CD8-positive, alpha-beta memory T cell (primary cell): ENCODE measurements at regions of chr19 and their contacts with region 1.

Region 1: GRCh38 chr19:12890787-12891552 is at the start of gene GCDH:
- DNase-seq: peak; percentile 92 to 98 (median 97)
- H3K4me3 ChIP-seq: peak within 1 kb of the TSS; percentile 87
- H3K4me3 Mint-ChIP-seq: peak within 1 kb of the TSS; percentile 93 to 100 (median 98)
- H3K27ac ChIP-seq: peak within 1 kb of the TSS; percentile 69
- H3K27ac Mint-ChIP-seq: peak within 1 kb of the TSS; percentile 82 to 99 (median 98)
- H3K4me1 ChIP-seq: peaks cover 12% of the 10 kb centered on the region
- H3K4me1 Mint-ChIP-seq: peaks cover 25 to 45% (median 27%) of the 10 kb centered on the region in 3 donors
- H3K27me3 ChIP-seq: no peaks in the 10 kb centered on the region
- H3K27me3 Mint-ChIP-seq: peaks cover 0 to 4% of the 10 kb centered on the region in 2 donors
- total RNA-seq, gene GCDH: 59.4 to 60.1 TPM

Region 2: GRCh38 chr19:12913011-12913561 is 22.1 kb after region 1 on chr19:
- CTCF ChIA-PET with region 1: interaction called, 10 read pairs
- POLR2A ChIA-PET with region 1: interaction called, 9 read pairs
- DNase-seq: no peak
- H3K4me3 ChIP-seq: no peak overlapping the region
- H3K4me3 Mint-ChIP-seq: no peak overlapping the region
- H3K27ac ChIP-seq: no peak overlapping the region
- H3K27ac Mint-ChIP-seq: peak overlapping the region in 3 of 8 donors; percentile 51 to 93 (median 93)
- H3K4me1 ChIP-seq: peaks cover 22% of the 10 kb centered on the region
- H3K4me1 Mint-ChIP-seq: peaks cover 19 to 29% (median 20%) of the 10 kb centered on the region in 3 donors
- H3K27me3 ChIP-seq: no peaks in the 10 kb centered on the region
- H3K27me3 Mint-ChIP-seq: peaks cover 0 to 2% of the 10 kb centered on the region in 2 donors

Region 3: GRCh38 chr19:12924616-12925276 is 33.8 kb after region 1 on chr19:
- CTCF ChIA-PET with region 1: no interaction called
- POLR2A ChIA-PET with region 1: no interaction called
- DNase-seq: no peak
- H3K4me3 ChIP-seq: no peak overlapping the region
- H3K4me3 Mint-ChIP-seq: no peak overlapping the region
- H3K27ac ChIP-seq: no peak overlapping the region
- H3K27ac Mint-ChIP-seq: peak overlapping the region in 1 of 8 donors; percentile 41
- H3K4me1 ChIP-seq: no peaks in the 10 kb centered on the region
- H3K4me1 Mint-ChIP-seq: peaks cover 3 to 10% (median 4%) of the 10 kb centered on the region in 3 donors
- H3K27me3 ChIP-seq: no peaks in the 10 kb centered on the region
- H3K27me3 Mint-ChIP-seq: no peaks in the 10 kb centered on the region

Region 4: DNA sequence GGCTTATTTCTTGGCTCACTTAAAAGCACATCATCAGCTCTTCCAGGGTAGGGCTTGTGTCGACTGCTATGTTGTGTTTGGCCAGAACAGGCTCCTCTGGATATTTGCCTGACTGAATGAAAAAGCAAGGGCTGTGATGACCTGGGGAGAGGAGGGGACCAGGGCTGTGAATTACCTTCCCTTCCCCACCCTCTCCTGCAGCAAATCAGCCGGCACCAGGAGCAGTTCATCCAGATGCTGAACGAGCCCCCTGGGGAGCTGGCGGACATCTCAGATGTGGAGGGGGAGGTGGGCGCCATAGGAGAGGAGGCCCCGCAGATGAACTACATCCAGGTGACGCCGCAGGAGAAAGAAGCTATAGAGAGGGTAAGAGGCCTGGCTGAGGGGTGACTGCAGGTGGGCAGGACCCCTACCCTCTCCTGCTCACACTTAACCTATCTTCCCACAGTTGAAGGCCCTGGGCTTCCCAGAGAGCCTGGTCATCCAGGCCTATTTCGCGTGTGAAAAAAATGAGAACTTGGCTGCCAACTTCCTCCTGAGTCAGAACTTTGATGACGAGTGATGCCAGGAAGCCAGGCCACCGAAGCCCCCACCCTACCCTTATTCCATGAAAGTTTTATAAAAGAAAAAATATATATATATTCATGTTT is 61.6 kb after region 1 on chr19:
- CTCF ChIA-PET with region 1: no interaction called
- POLR2A ChIA-PET with region 1: no interaction called
- DNase-seq: no peak
- H3K4me3 ChIP-seq: no peak overlapping the region
- H3K4me3 Mint-ChIP-seq: no peak overlapping the region
- H3K27ac ChIP-seq: no peak overlapping the region
- H3K27ac Mint-ChIP-seq: peak overlapping the region in 1 of 8 donors; percentile 19
- H3K4me1 ChIP-seq: peaks cover 15% of the 10 kb centered on the region
- H3K4me1 Mint-ChIP-seq: peaks cover 26 to 38% (median 27%) of the 10 kb centered on the region in 3 donors
- H3K27me3 ChIP-seq: no peaks in the 10 kb centered on the region
- H3K27me3 Mint-ChIP-seq: no peaks in the 10 kb centered on the region

Region 5: DNA sequence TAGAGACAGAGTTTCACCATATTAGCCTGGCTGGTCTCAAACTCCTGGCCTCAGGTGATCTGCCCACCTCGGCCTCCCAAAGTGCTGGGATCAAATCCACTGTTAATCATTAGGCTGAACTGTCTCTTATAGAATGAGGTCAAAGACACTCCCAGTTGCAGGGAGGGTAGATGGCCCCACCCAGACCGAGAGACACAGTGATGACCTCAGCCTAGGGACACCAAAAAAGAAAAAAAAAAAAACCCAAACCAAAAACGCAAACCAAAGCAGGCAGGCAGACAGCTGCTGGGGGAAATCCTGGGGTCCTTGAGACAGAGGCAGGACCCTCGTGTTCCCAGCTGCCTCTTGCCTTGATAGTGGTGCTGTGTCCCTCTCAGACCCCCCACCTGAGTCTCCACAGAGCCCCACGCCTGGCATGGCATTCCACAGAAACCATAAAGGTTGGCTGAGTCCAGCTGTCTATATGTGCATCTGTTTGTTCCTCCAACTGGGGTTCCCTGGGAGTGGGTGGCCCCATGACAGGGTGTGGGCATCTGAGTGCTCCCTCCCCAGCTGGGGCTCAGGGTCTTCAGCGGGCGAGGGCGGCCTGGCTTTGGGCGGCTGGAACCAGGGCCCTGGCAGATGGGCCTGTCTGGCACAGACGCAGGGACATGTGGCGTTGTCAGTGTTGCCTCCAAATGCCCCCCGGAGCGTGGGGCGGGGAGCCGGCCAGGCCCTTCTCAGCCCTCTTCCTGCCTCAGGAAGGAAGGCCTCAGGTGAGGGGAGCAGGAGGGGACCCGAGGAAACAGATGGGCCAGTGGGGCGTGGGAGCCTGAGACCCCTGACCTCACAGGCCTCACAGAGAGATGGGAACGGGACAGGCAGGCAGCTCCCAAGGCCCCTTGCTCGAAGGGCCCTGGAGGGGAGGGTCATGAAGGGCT is 83.6 kb after region 1 on chr19:
- CTCF ChIA-PET with region 1: no interaction called
- POLR2A ChIA-PET with region 1: no interaction called
- DNase-seq: no peak
- H3K4me3 ChIP-seq: no peak overlapping the region
- H3K4me3 Mint-ChIP-seq: no peak overlapping the region
- H3K27ac ChIP-seq: no peak overlapping the region
- H3K27ac Mint-ChIP-seq: peak overlapping the region in 1 of 8 donors; percentile 54
- H3K4me1 ChIP-seq: no peaks in the 10 kb centered on the region
- H3K4me1 Mint-ChIP-seq: peaks cover 0 to 3% (median 0%) of the 10 kb centered on the region in 3 donors
- H3K27me3 ChIP-seq: no peaks in the 10 kb centered on the region
- H3K27me3 Mint-ChIP-seq: peaks cover 19 to 26% of the 10 kb centered on the region in 2 donors